ENCODE measurements at regions of chr21 and their contacts with region 1.

Region 1: GRCh38 chr21:44011980-44012527 is at the start of gene TRAPPC10:
- DNase-seq: peak; percentile 80
- ATAC-seq: peak; percentile 95
- H3K4me3 ChIP-seq: peak within 1 kb of the TSS; percentile 92
- H3K27ac ChIP-seq: peak within 1 kb of the TSS; percentile 90
- H3K4me1 ChIP-seq: peaks cover 7% of the 10 kb centered on the region; the same call in 1 of the 2 replicates
- H3K27me3 ChIP-seq: no peaks in the 10 kb centered on the region
- CTCF ChIP-seq: no peak
- POLR2A ChIP-seq: peak; percentile 83
- RAD21 ChIP-seq: no peak
- total RNA-seq, gene TRAPPC10: 18.1 and 18.3 TPM in 2 replicates

Region 2: DNA sequence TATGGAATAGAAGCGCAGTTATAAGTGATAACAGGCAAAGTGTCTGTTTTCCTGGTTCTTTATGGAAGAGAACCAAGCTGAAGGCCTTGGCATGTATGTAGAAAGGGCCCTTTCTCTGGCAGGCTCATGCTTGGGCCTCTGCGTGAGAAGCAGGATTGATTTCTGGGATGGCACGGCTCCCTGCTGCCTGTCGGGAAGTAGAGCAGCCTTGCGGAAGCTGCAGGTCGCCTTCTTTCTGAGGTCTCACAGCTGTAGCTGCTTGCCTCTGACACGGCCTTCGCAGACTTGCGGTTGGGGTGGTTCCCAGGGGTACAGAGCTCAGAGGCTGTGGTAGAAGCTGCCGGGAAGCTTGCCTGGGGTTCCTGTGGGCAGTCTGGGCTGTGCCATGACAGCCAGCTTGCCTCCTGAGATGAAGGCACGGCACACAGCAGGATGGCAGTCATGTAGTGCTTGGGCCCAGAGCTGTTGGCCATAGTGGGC is 39.4 kb after region 1 on chr21:
- CTCF ChIA-PET with region 1: no interaction called
- POLR2A ChIA-PET with region 1: interaction called, 5 read pairs
- dilution Hi-C with region 1: no loop called
- in situ Hi-C with region 1: no loop called
- intact Hi-C with region 1: loop called (anchors 5 kb)
- DNase-seq: peak; percentile 55
- ATAC-seq: peak; percentile 16
- H3K4me3 ChIP-seq: no peak overlapping the region
- H3K27ac ChIP-seq: peak overlapping the region; percentile 72
- H3K4me1 ChIP-seq: peaks cover 20% of the 10 kb centered on the region
- H3K27me3 ChIP-seq: no peaks in the 10 kb centered on the region
- CTCF ChIP-seq: no peak
- POLR2A ChIP-seq: no peak
- RAD21 ChIP-seq: no peak

Region 3: GRCh38 chr21:44666401-44667320 is 654.6 kb after region 1 on chr21 and contains the start of gene KRTAP12-2:
- CTCF ChIA-PET with region 1: no interaction called
- POLR2A ChIA-PET with region 1: no interaction called
- dilution Hi-C with region 1: no loop called
- in situ Hi-C with region 1: no loop called
- intact Hi-C with region 1: no loop called
- DNase-seq: no peak
- ATAC-seq: no peak
- H3K4me3 ChIP-seq: no peak within 1 kb of the TSS
- H3K27ac ChIP-seq: no peak within 1 kb of the TSS
- H3K4me1 ChIP-seq: no peaks in the 10 kb centered on the region
- H3K27me3 ChIP-seq: 0 out of 2 replicates have a peak, but pooled peaks cover 3% of the 10 kb centered on the region
- CTCF ChIP-seq: no peak
- POLR2A ChIP-seq: no peak
- RAD21 ChIP-seq: no peak
- total RNA-seq, gene KRTAP12-2: not detected in 2 replicates